Aorta (tissue), 5 donors: ENCODE measurements at regions of chr15 and their contacts with region 1.

Region 1: DNA sequence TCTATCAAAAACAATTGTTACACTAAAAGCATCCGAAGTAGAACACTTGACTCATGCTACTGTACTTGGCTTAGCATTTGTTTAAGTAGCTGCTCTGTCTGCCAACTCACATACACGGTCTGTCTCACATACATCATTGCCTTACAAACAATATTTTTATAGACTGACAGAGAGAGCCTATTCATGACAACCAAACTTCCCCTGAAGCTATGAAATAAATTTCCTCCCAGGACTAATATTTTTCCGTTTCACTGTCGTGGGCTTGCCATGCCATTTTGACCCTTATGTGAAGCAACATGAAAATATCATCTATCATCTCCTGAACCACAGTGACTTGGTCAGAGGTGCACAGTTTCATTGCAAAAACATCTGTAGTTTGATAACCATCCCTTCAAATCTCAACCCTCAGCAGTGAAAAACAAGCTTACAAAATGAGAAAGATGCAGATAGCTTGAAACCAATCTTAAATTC is 66.5 kb upstream of the PYGO1 start:
- DNase-seq: no peak
- ATAC-seq: no peak
- H3K4me3 ChIP-seq: no peak overlapping the region
- H3K27ac ChIP-seq: no peak overlapping the region
- H3K4me1 ChIP-seq: no peaks in the 10 kb centered on the region
- H3K27me3 ChIP-seq: no peaks in the 10 kb centered on the region

Region 2: DNA sequence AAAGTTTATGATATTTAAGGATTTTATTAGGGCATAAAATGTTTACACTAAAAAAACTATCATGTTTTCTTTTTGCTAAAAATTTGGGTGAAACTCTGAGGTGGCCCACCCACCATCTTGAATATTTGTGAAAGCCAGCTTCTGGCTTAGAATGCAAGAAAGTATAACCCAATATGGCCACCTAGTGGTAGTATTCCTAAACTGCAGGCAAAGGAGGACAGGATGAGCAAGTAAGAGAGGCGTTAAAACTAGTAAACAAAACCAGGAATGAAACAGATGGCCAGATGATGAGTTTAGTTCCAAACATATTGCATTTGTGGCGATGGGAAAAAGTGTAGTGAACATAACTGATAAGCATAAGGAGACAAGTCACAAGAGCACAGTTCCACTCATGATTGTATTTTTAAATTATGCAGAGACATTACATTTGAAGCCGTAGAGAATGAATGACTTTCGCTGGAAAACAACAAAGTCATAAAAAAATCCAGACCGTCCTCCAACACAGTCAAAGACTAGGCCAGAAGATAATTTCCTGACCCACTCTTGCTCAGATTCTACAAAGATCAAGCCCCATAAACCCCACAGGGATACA is 191.6 kb after region 1 on chr15:
- intact Hi-C with region 1: loop called (anchors 5 kb)
- DNase-seq: no peak
- ATAC-seq: peak; percentile 74
- H3K4me3 ChIP-seq: no peak overlapping the region
- H3K27ac ChIP-seq: no peak overlapping the region
- H3K4me1 ChIP-seq: no peaks in the 10 kb centered on the region
- H3K27me3 ChIP-seq: no peaks in the 10 kb centered on the region

Region 3: GRCh38 chr15:56232058-56232457 is 577.5 kb after region 1 on chr15:
- intact Hi-C with region 1: no loop called
- DNase-seq: no peak
- ATAC-seq: no peak
- H3K4me3 ChIP-seq: no peak overlapping the region
- H3K27ac ChIP-seq: no peak overlapping the region
- H3K4me1 ChIP-seq: no peaks in the 10 kb centered on the region
- H3K27me3 ChIP-seq: no peaks in the 10 kb centered on the region